Endothelial cell of umbilical vein (primary cell): ENCODE measurements at regions of chr10 and their contacts with region 1.

Region 1: DNA sequence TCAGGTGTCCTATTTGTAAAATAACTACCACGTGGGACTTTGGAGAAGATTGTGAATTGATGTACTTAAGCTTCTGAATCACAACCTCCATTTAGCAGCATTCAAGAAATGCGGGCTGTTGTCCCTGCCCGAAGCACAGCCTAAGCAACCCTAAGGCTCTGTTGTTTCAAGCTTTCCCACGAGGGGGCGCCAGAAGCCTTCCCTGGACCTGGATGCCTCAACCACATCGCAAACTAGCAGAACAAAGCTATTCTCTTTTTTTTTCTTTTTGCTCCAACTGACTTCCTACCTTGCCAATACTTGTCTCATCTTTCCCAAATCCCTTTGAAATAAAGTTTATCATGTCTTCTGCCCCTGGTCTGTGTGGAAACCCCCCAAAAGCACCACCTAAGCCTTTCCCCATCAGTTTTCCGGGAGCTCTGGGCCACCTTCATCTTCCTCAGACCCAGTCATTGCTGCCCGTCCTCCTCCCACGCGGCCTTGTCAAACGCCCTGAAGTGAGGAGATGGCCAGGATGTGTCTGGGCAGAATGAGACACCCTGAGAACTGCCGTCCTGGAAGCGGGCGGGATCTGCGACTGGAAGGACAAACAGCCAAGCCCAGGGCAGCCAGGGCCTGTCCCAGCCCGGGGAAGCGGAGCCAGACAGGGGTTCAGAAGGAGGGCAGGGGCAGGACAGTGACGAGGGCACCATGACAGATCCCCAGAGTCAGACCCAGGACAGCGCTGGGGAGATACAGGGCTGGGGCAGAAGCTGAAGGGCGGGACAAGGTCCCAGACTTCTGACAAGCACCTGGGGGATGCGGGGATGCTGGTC is 112.7 kb downstream of the SLIT1 start:
- DNase-seq: peak; percentile 78
- H3K4me3 ChIP-seq: no peak overlapping the region
- H3K27ac ChIP-seq: no peak overlapping the region
- H3K4me1 ChIP-seq: no peaks in the 10 kb centered on the region
- H3K27me3 ChIP-seq: peaks cover 2 to 4% of the 10 kb centered on the region in 2 experiments
- CTCF ChIP-seq: peak; percentile 88 to 95
- POLR2A ChIP-seq: no peak

Region 2: GRCh38 chr10:97059006-97059871 is 13.8 kb before region 1 on chr10:
- CTCF ChIA-PET with region 1: interaction called, 14 read pairs
- POLR2A ChIA-PET with region 1: no interaction called
- dilution Hi-C with region 1: no loop called
- intact Hi-C with region 1: no loop called
- DNase-seq: no peak
- H3K4me3 ChIP-seq: no peak overlapping the region
- H3K27ac ChIP-seq: no peak overlapping the region
- H3K4me1 ChIP-seq: no peaks in the 10 kb centered on the region
- H3K27me3 ChIP-seq: peaks cover 0 to 1% of the 10 kb centered on the region in 2 experiments
- CTCF ChIP-seq: no peak
- POLR2A ChIP-seq: no peak

Region 3: GRCh38 chr10:97109547-97109946 is 36.5 kb after region 1 on chr10:
- CTCF ChIA-PET with region 1: interaction called, 13 read pairs
- POLR2A ChIA-PET with region 1: no interaction called
- dilution Hi-C with region 1: no loop called
- intact Hi-C with region 1: no loop called
- DNase-seq: no peak
- H3K4me3 ChIP-seq: no peak overlapping the region
- H3K27ac ChIP-seq: no peak overlapping the region
- H3K4me1 ChIP-seq: no peaks in the 10 kb centered on the region
- H3K27me3 ChIP-seq: peaks cover 2 to 4% of the 10 kb centered on the region in 2 experiments
- CTCF ChIP-seq: no peak
- POLR2A ChIP-seq: no peak

Region 4: DNA sequence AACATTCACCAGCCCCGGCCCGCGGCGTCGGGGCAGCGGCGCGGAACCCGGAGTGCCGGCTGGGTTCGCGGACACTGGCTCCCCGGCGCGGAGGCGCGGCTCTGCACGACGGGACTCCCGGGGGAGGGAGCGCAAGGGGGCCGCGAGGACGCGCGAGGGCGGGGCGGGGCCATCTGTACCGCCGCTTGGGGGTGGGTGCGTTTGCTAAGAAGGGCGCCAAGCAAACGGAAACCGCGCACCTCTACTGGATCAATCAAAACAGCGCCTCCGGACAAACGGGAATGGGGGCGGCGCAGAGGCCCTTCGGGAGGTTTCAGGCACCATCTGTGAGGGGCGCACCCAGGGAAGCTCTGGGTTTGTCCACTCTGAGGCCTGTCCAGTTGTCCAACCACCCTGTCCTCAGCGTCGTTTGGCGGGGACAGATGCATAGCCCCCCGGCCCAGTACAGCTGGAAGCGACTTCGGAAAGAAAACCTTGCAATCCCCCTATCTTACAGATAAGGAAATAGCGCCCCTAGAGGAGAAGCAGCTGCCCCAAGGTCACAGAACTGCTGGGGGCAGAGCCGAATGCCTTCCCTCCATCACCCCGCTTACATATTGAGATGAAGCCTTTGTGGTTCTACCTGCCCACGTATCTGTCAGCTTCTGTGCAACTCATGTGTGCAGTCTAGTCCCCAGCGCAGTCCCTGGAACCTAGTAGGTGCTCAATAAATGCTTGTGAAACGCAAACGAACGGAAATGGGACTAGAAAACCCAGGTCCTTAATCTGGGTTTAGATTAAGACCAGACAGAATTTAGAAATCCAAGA is 123.4 kb after region 1 on chr10:
- CTCF ChIA-PET with region 1: interaction called, 59 read pairs
- POLR2A ChIA-PET with region 1: no interaction called
- dilution Hi-C with region 1: no loop called
- intact Hi-C with region 1: loop called (anchors 5 kb)
- DNase-seq: peak; percentile 48
- H3K4me3 ChIP-seq: peak overlapping the region; percentile 39 to 55 (median 40)
- H3K27ac ChIP-seq: no peak overlapping the region
- H3K4me1 ChIP-seq: no peaks in the 10 kb centered on the region
- H3K27me3 ChIP-seq: peaks cover 15 to 17% of the 10 kb centered on the region in 2 experiments
- CTCF ChIP-seq: peak; percentile 80 to 84
- POLR2A ChIP-seq: no peak

Region 5: GRCh38 chr10:97234400-97234799 is 161.3 kb after region 1 on chr10:
- CTCF ChIA-PET with region 1: interaction called, 126 read pairs
- POLR2A ChIA-PET with region 1: no interaction called
- dilution Hi-C with region 1: no loop called
- intact Hi-C with region 1: loop called (anchors 1 kb)
- DNase-seq: peak; percentile 62
- H3K4me3 ChIP-seq: no peak overlapping the region
- H3K27ac ChIP-seq: no peak overlapping the region
- H3K4me1 ChIP-seq: no peaks in the 10 kb centered on the region
- H3K27me3 ChIP-seq: no peaks in the 10 kb centered on the region
- CTCF ChIP-seq: peak; percentile 43 to 50
- POLR2A ChIP-seq: no peak

Region 6: GRCh38 chr10:97355571-97355975 is 282.5 kb after region 1 on chr10:
- CTCF ChIA-PET with region 1: interaction called, 43 read pairs
- POLR2A ChIA-PET with region 1: no interaction called
- dilution Hi-C with region 1: no loop called
- intact Hi-C with region 1: no loop called
- DNase-seq: peak; percentile 80
- H3K4me3 ChIP-seq: no peak overlapping the region
- H3K27ac ChIP-seq: peak overlapping the region; percentile 36
- H3K4me1 ChIP-seq: peaks cover 13% of the 10 kb centered on the region
- H3K27me3 ChIP-seq: no peaks in the 10 kb centered on the region
- CTCF ChIP-seq: peak; percentile 39 to 45
- POLR2A ChIP-seq: no peak